ENCODE measurements at regions of chr2 and their contacts with region 1.

Region 1: GRCh38 chr2:206784559-206785353 is 19.4 kb downstream of the FASTKD2 start:
- DNase-seq: no peak

Region 2: DNA sequence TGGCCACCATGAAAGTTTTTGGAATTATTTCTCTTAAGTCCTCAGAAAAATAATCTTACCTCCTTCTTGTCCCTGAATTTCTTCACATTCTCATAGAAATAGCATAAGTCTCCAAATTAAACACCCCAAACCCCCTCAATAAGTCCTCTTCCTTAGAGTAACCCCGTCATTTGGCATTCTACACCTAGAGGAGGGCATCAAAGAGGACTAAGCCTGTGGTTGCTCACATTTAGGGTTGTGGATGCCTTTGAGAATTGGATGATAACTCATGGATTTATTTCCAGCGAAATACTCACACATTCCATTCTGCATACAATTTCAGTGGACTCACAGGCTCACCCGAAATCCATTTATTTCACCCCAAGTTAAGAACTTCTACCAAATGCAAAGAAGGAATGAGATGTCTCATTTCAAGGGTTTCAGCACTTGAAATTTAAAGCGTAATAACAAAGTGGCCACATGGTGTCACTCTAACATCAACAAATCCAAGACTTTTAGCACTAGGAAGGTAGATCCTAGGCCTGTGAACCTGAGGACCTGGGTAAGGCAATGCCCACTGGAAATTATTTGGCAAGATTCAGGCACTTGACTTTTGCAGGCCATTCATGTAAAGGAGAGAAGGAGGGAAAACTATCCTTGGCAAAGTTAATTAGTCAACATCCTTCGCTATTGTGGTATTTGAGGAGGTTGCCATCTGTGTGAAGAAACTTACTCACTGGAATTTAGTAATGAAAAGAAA is 91.2 kb before region 1 on chr2:
- intact Hi-C with region 1: loop called (anchors 5 kb)
- DNase-seq: peak in 1 of 10 donors; percentile 12

Measured in posterior cingulate gyrus (tissue), 11 donors.